CD8-positive, alpha-beta T cell (primary cell): ENCODE measurements at regions of chr17 and their contacts with region 1.

Region 1: GRCh38 chr17:41153856-41154255 is 4.2 kb upstream of the KRTAP4-5 start:
- DNase-seq: no peak
- ATAC-seq: no peak
- H3K4me3 ChIP-seq: no peak overlapping the region
- H3K4me3 Mint-ChIP-seq: no peak overlapping the region
- H3K27ac ChIP-seq: no peak overlapping the region
- H3K27ac Mint-ChIP-seq: no peak overlapping the region
- H3K4me1 ChIP-seq: no peaks in the 10 kb centered on the region
- H3K4me1 Mint-ChIP-seq: no peaks in the 10 kb centered on the region
- H3K27me3 ChIP-seq: no peaks in the 10 kb centered on the region
- H3K27me3 Mint-ChIP-seq: peaks cover 10% of the 10 kb centered on the region
- CTCF ChIP-seq: no peak

Region 2: DNA sequence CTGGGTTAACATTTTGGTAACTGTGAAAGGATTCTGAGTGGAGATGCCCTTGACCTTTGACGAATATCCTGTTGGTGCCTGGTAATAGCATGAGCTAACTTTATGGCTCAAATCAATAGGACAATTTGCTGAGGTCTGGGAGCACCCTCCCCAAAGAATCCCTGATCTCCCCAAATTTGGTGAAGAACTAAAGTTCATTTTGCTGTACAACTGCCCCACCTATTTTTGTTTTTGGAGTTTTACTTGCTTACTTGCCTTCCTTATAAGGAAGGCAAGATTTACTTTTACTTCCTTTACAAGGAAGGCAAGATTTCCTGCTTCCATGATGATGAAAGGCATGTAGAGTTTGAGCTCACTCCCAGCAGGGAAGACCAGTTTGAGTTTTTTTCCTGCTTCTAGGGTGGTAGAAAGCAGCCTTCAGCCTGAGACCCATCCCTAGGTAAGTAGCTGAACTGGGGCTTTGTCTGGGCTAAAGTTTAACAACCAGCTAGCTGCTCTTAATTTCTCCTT is 45.9 kb before region 1 on chr17:
- CTCF ChIA-PET with region 1: no interaction called
- POLR2A ChIA-PET with region 1: no interaction called
- intact Hi-C with region 1: loop called in 1 of 2 experiments (anchors 10 kb)
- DNase-seq: no peak
- ATAC-seq: no peak
- H3K4me3 ChIP-seq: no peak overlapping the region
- H3K4me3 Mint-ChIP-seq: no peak overlapping the region
- H3K27ac ChIP-seq: no peak overlapping the region
- H3K27ac Mint-ChIP-seq: no peak overlapping the region
- H3K4me1 ChIP-seq: peaks cover 11% of the 10 kb centered on the region
- H3K4me1 Mint-ChIP-seq: peaks cover 11% of the 10 kb centered on the region
- H3K27me3 ChIP-seq: no peaks in the 10 kb centered on the region
- H3K27me3 Mint-ChIP-seq: peaks cover 4% of the 10 kb centered on the region
- CTCF ChIP-seq: no peak

Region 3: DNA sequence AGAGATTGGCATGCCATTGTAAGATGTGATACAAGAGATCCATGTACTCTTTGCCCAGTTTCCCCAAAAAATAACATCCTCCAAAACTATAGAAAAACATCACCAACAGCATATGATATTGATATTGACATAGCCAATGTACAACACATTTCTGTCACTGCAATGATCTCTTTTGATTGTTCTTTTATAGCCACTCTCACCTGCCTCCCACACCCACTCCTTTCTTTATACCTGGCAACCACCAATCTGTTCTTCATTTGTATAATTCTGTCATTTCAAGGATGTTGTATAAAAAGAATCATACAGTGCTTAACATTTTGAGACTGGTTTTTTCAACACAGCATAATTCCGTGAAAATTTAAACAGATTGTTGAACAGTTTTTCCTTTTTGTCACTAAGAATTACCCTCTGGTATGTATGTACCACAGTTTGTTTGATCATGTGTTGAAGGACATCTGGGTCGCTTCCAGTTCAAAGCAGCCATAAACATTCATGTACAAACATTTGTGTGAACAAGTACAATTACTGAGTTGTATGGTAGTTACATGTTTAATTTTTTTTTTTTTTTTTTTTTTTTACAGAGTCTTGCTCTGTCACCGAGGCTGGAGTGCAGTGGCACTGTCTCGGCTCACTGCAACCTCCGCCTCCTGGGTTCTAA is 45.7 kb after region 1 on chr17:
- CTCF ChIA-PET with region 1: no interaction called
- POLR2A ChIA-PET with region 1: no interaction called
- intact Hi-C with region 1: no loop called
- DNase-seq: no peak
- ATAC-seq: no peak
- H3K4me3 ChIP-seq: no peak overlapping the region
- H3K4me3 Mint-ChIP-seq: no peak overlapping the region
- H3K27ac ChIP-seq: no peak overlapping the region
- H3K27ac Mint-ChIP-seq: no peak overlapping the region
- H3K4me1 ChIP-seq: no peaks in the 10 kb centered on the region
- H3K4me1 Mint-ChIP-seq: no peaks in the 10 kb centered on the region
- H3K27me3 ChIP-seq: no peaks in the 10 kb centered on the region
- H3K27me3 Mint-ChIP-seq: no peaks in the 10 kb centered on the region
- CTCF ChIP-seq: no peak